IMR-90 (cell line): ENCODE measurements at regions of chr22 and their contacts with region 1.

Region 1: DNA sequence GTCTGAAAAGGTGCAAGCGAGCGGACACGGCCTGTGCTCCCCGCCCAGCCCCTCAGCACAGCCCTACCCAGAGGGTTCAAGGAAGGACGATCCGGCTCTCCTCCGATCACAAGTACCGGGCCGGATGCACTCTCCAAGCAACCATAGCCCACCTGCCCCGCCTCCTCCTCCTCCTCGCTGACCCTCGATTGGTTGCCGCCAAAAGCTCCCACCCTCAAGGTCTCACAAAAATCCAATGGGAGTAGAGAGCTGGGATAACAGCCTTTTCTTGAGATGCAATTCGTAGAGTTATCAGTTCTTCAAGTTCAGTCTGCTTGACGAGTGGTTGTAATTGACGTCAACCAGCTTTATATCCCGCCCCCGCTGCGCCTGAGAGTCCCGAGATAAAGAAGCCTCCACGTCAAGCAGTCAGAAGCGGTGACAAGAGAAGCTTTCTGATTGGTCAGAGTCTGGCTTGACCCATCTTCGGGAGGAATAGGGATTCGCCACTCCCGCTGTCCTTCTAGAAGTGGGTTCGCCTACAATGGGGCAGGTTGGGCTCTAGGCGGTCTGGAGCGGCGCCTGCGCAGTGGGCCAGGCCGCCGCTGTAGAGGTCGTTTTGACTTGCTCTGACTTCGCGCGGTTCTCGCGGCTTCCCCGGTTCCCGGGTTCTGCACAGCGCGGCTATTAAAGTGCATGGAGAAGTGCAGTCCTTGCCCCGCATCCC is at the start of gene IFT27:
- DNase-seq: peak; percentile 100
- ATAC-seq: peak; percentile 96
- H3K4me3 ChIP-seq: peak within 1 kb of the TSS; percentile 56
- H3K27ac ChIP-seq: peak within 1 kb of the TSS; percentile 31
- H3K4me1 ChIP-seq: peaks cover 4% of the 10 kb centered on the region
- H3K27me3 ChIP-seq: no peaks in the 10 kb centered on the region
- CTCF ChIP-seq: no peak
- POLR2A ChIP-seq: peak; percentile 46; the same call in 1 of the 2 replicates
- RAD21 ChIP-seq: no peak
- total RNA-seq, gene IFT27: 14.5 and 18.3 TPM in 2 replicates

Region 2: DNA sequence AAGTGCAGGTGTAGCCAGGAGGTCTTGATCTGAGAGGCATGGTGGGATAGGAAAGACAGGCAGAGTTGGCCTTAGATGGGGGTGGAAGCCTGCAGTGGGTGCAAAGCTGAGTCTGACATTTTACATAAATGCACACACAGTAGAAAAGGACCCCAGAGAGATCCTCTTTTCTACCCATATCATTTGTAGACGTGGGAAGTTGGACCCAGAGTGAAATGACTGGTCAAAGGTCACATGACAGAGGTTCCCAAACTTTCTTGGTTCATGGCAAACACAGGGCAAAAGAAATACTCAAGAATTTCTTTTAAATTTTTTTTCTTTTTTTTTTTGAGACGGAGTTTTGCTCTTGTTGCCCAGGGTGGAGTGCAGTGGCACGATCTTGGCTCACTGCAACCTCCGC is 263.1 kb before region 1 on chr22:
- CTCF ChIA-PET with region 1: no interaction called
- POLR2A ChIA-PET with region 1: interaction called, 15 read pairs
- dilution Hi-C with region 1: no loop called
- in situ Hi-C with region 1: no loop called
- intact Hi-C with region 1: no loop called
- DNase-seq: no peak
- ATAC-seq: no peak
- H3K4me3 ChIP-seq: no peak overlapping the region
- H3K27ac ChIP-seq: no peak overlapping the region
- H3K4me1 ChIP-seq: no peaks in the 10 kb centered on the region
- H3K27me3 ChIP-seq: no peaks in the 10 kb centered on the region
- CTCF ChIP-seq: no peak
- POLR2A ChIP-seq: no peak
- RAD21 ChIP-seq: no peak